ENCODE measurements at regions of chr11 and their contacts with region 1.

Region 1: DNA sequence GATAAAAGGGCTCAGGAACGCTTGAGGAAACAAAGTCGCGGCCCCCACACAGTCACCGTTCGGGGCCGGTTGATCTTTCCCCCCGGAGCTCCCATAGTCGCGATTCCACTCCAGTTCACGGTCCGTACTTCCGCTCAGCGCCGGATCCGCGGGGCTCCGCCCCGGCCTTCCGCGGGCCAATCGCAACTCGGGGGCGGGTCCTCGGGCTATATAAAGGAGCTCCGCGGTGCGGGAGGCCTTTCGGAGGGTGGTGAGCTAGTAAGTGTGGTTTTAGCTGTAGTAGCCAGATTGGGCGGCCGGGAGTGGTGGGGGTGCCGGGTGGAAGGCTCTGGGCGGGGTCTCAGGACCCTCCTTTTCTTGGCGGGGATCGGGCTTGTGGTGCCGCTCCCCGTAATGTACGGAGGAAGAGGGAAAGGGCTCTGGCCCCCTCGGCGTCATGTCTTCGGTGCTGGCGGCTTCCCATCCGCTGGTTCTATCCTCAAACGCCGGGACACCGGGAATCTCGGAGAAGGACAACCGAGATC is at the starts of genes C11orf98 and CSKMT:
- DNase-seq: peak; percentile 92 to 98 (median 95)
- ATAC-seq: peak; percentile 87
- H3K4me3 ChIP-seq: peak within 1 kb of the TSS; percentile 95 to 97
- H3K4me3 Mint-ChIP-seq: peak within 1 kb of the TSS; percentile 96
- H3K27ac ChIP-seq: peak within 1 kb of the TSS; percentile 81 to 92
- H3K27ac Mint-ChIP-seq: peak within 1 kb of the TSS; percentile 93
- H3K4me1 ChIP-seq: peaks cover 31% of the 10 kb centered on the region
- H3K4me1 Mint-ChIP-seq: peaks cover 45% of the 10 kb centered on the region
- H3K27me3 ChIP-seq: no peaks in the 10 kb centered on the region
- H3K27me3 Mint-ChIP-seq: no peaks in the 10 kb centered on the region
- CTCF ChIP-seq: no peak
- total RNA-seq, gene C11orf98: 22.5 to 25.7 TPM
- total RNA-seq, gene CSKMT: 25.4 to 25.7 TPM

Region 2: DNA sequence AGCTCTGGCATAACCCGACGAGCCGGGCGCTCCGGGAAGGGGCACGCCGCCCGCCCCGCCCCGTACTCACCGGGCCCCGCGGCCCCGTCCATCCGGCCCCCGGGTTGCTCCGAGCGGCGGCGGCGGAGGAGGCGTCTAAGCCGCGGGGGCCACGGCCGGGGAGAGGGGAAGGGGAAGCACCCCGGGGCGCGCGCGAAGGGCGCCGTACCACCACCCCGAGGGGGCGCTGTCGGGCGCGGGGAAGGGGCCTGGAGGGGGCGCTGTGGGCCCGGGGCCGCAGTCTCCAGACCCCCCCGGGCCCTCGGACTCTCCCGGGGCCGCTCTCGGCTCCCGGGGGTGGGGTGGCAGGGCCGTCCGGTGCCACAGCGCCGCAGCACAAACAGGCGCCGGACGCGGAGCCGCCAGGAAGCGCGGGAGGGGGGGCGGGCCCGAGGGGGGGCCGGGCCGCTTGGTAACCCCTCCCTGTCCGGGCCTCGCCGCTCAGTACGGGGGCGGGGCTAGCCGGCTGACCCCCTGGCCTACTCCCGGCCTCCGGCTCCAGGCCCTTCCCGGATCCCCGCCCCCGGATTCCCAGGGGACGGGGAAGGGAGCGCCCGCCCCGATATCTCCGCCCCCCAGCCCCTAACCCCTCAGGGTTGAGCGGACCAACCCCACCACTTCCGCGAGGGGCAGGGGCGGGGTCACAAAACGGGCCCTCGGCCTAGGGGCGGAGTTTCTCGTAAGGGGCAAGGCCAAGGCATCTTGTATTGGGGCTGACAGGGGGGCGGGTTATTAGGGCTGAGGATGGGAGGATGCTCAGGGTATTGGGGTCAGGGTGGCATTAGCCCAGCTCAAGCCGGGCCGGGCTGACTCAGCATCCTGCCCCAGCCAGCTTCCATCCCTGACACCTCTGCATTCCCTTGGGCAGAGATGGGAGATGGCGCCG is 52.5 kb before region 1 on chr11 and contains the starts of genes EML3 and ROM1:
- CTCF ChIA-PET with region 1: interaction called, 5 read pairs
- POLR2A ChIA-PET with region 1: interaction called, 23 read pairs
- intact Hi-C with region 1: loop called (anchors 1 kb)
- DNase-seq: peak; percentile 79 to 95 (median 88)
- ATAC-seq: peak; percentile 72
- H3K4me3 ChIP-seq: peak within 1 kb of the TSS; percentile 67 to 97
- H3K4me3 Mint-ChIP-seq: peak within 1 kb of the TSS; percentile 95
- H3K27ac ChIP-seq: peak within 1 kb of the TSS; percentile 91
- H3K27ac Mint-ChIP-seq: peak within 1 kb of the TSS; percentile 99
- H3K4me1 ChIP-seq: peaks cover 38% of the 10 kb centered on the region
- H3K4me1 Mint-ChIP-seq: peaks cover 54% of the 10 kb centered on the region
- H3K27me3 ChIP-seq: no peaks in the 10 kb centered on the region
- H3K27me3 Mint-ChIP-seq: no peaks in the 10 kb centered on the region
- CTCF ChIP-seq: peak; percentile 99
- total RNA-seq, gene EML3: 167 to 189 TPM
- total RNA-seq, gene ROM1: 1.7 to 2.1 TPM

Region 3: GRCh38 chr11:62645956-62646824 is 18.9 kb before region 1 on chr11 and contains the start of gene GANAB:
- CTCF ChIA-PET with region 1: interaction called, 14 read pairs
- POLR2A ChIA-PET with region 1: interaction called, 51 read pairs
- intact Hi-C with region 1: loop called (anchors 1 to 2 kb)
- DNase-seq: peak; percentile 96 to 99 (median 99)
- ATAC-seq: peak; percentile 98
- H3K4me3 ChIP-seq: peak within 1 kb of the TSS; percentile 81 to 98
- H3K4me3 Mint-ChIP-seq: peak within 1 kb of the TSS; percentile 98
- H3K27ac ChIP-seq: peak within 1 kb of the TSS; percentile 90 to 98
- H3K27ac Mint-ChIP-seq: peak within 1 kb of the TSS; percentile 98
- H3K4me1 ChIP-seq: peaks cover 27% of the 10 kb centered on the region
- H3K4me1 Mint-ChIP-seq: peaks cover 37% of the 10 kb centered on the region
- H3K27me3 ChIP-seq: no peaks in the 10 kb centered on the region
- H3K27me3 Mint-ChIP-seq: no peaks in the 10 kb centered on the region
- CTCF ChIP-seq: no peak
- total RNA-seq, gene GANAB: 177 to 184 TPM

Region 4: DNA sequence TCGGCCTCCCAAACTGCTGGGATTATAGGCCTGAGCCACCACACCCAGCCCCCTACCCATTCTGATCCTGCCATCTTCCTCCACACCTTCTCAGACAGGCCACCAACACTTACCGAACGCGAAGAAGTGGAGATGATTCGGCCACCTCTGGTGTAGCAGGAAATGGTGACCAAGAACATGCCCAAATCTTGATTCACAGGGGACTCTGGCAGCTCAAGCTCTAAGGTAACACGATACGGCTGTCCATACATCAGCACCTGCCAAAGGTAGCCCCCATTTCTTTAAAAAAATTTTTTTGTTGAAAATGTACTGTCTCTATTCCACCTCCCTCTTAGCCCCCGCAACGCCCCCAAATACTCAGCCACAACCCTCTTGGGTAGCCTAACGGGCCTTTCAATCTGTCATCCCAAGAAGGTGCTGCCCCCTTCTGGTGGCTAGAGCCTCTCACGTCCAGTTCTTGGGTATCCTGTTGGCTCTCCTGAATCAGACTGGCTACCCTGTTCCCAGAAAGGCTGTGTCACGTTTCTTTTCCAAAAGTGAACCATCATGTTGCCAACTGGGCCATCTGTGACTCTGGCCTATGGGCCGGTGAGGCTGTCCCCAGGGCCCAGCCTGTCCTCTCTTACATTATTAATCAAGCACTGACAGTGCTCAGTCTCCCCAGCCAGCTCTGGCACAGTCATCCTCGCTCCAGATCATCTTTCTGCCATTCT is 29.5 kb after region 1 on chr11:
- CTCF ChIA-PET with region 1: interaction called, 10 read pairs
- POLR2A ChIA-PET with region 1: interaction called, 8 read pairs
- intact Hi-C with region 1: no loop called
- DNase-seq: peak; percentile 57 to 88 (median 81)
- ATAC-seq: peak; percentile 91
- H3K4me3 ChIP-seq: no peak overlapping the region
- H3K4me3 Mint-ChIP-seq: no peak overlapping the region
- H3K27ac ChIP-seq: no peak overlapping the region
- H3K27ac Mint-ChIP-seq: no peak overlapping the region
- H3K4me1 ChIP-seq: peaks cover 6% of the 10 kb centered on the region
- H3K4me1 Mint-ChIP-seq: peaks cover 3% of the 10 kb centered on the region
- H3K27me3 ChIP-seq: no peaks in the 10 kb centered on the region
- H3K27me3 Mint-ChIP-seq: no peaks in the 10 kb centered on the region
- CTCF ChIP-seq: peak; percentile 79

Region 5: DNA sequence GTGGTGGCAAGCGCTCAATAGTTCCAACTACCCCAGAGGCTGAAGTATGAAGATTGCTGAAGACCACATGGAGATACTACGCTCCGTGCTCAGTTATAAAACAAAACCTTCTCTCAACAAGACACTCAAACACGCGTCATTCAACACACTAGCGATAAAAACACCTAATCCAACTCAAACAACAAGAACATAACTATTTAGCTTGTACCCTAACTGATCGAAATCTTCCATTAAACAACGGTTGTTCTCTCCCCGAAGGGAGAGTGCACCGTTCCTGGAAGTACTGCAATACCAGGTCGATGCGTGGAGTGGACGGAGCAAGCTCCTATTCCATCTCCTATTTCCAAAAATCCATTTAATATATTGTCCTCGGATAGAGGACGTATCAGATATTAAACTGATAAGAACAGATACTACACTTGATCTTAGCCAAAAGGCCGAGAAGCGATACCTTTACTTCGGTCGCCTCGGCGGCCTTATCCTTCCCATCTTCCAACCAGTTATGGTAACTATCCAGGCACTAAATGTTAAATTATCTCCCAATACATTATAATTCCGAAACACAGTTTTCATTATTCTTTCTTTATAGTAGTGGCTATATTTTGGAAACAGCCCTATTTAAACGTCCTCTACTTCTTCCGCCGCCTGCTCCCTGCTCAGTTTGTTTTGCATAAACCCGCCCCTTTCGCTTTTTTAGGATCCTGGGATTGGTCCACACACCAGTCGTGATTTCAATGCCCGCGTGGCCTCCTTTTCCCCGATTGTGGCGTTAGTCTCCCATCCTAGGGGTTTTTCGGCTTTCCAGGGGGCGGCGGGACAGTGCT is 176.4 kb after region 1 on chr11:
- CTCF ChIA-PET with region 1: no interaction called
- POLR2A ChIA-PET with region 1: interaction called, 14 read pairs
- intact Hi-C with region 1: no loop called
- DNase-seq: peak; percentile 69 to 95 (median 80)
- ATAC-seq: peak; percentile 49
- H3K4me3 ChIP-seq: peak overlapping the region; percentile 61 to 79
- H3K4me3 Mint-ChIP-seq: no peak overlapping the region
- H3K27ac ChIP-seq: peak overlapping the region; percentile 97 to 99
- H3K27ac Mint-ChIP-seq: no peak overlapping the region
- H3K4me1 ChIP-seq: peaks cover 32% of the 10 kb centered on the region
- H3K4me1 Mint-ChIP-seq: peaks cover 25% of the 10 kb centered on the region
- H3K27me3 ChIP-seq: no peaks in the 10 kb centered on the region
- H3K27me3 Mint-ChIP-seq: no peaks in the 10 kb centered on the region
- CTCF ChIP-seq: no peak

Measured in CD8-positive, alpha-beta T cell (primary cell).